ENCODE measurements at regions of chr7 and their contacts with region 1.

Region 1: GRCh38 chr7:129530795-129531391 is 28.6 kb downstream of the SMKR1 start:
- DNase-seq: no peak
- H3K4me3 ChIP-seq: no peak overlapping the region
- H3K27ac ChIP-seq: no peak overlapping the region
- H3K4me1 ChIP-seq: peaks cover 0 to 4% (median under 1%) of the 10 kb centered on the region in 4 experiments; a peak in 3 of 7 replicates
- H3K27me3 ChIP-seq: no peaks in the 10 kb centered on the region
- CTCF ChIP-seq: no peak
- EP300 ChIP-seq: no peak
- POLR2A ChIP-seq: no peak
- RAD21 ChIP-seq: no peak

Region 2: DNA sequence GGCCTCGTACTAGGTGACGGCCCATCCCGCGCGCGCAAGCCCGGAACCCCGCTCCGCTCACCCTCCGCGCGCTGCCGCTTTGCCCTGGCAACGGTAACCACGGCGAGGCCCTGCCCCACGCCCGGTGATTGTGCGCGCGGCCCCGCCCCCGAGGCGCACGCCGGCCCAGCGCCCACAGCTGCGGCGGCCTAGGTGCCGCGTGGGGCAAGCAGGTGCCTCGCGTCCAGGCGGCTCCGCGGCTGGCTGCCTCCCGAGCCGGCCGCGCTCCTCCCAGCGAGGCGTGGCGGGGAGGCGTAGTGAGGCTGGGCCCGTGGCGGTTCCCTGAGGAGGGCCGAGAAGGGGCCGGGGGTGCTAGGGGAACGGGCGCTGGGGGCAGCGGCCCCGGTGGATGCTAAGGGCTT is 28.5 kb before region 1 on chr7 and contains the start of gene SMKR1:
- CTCF ChIA-PET with region 1: interaction called, 12 read pairs
- POLR2A ChIA-PET with region 1: no interaction called
- DNase-seq: peak in 1 of 2 experiments; percentile 77
- H3K4me3 ChIP-seq: peak within 1 kb of the TSS; percentile 53 to 69 (median 57)
- H3K27ac ChIP-seq: no peak within 1 kb of the TSS
- H3K4me1 ChIP-seq: peaks cover 0 to 11% (median 4%) of the 10 kb centered on the region in 4 experiments; a peak in 3 of 7 replicates
- H3K27me3 ChIP-seq: peaks cover 0 to 22% (median 20%) of the 10 kb centered on the region in 4 experiments; a peak in 5 of 7 replicates
- CTCF ChIP-seq: no peak
- EP300 ChIP-seq: no peak
- POLR2A ChIP-seq: no peak
- RAD21 ChIP-seq: no peak; a peak in 1 of 4 replicates
- total RNA-seq, gene SMKR1: 0.39 and 1.2 TPM in 2 replicates

Measured in H1 (cell line).